Mammary epithelial cell (primary cell): ENCODE measurements at regions of chr1 and their contacts with region 1.

Region 1: DNA sequence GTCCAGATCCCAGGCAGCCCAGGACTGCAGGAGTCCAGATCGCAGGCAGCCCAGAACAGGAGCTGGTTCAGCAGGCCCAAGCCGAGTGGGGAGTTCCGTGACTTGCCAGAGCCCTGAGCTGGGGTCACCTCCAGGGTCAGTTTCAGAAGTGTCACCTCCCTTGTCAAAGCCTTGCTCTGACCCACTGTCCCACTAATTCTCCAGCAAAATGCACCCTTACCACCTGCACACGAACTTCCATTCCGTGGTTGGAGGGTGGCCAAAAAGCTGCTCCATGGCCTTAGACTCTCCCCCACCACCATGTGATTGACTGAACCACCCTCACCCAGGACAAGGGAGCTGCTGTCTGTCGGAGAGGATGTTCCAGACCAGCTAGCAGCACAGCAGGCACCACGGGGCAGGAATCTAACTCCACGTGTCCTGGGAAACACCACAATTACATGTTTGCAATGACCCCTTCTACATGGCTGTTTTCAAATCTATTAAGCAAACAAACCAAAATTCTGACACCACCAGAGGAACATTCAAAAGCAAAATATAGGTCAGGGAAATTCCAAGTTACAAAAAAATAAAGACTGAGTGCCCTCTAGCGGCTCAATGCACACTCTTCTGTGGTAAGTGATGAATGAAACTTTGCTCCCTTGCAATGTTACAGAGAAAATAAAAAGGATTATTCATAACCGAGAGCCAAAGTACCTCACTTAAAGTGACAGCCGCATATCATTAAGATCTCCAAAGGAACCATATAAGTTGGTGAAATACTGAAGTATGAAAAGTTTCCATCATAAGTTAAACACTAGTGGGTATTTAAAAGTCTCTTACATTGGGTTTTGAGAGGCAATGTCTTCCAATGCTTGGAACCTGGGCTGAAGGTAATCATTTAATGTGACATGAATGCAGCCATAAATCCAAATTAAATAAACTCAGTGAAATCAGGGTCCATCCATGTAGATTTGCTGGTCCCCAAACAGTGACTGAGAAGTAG is 76.3 kb downstream of the NPHP4 start:
- DNase-seq: peak; percentile 58
- H3K4me3 ChIP-seq: no peak overlapping the region
- H3K27ac ChIP-seq: no peak overlapping the region
- H3K4me1 ChIP-seq: peaks cover 8% of the 10 kb centered on the region
- H3K27me3 ChIP-seq: no peaks in the 10 kb centered on the region
- CTCF ChIP-seq: peak; percentile 73 to 77

Region 2: DNA sequence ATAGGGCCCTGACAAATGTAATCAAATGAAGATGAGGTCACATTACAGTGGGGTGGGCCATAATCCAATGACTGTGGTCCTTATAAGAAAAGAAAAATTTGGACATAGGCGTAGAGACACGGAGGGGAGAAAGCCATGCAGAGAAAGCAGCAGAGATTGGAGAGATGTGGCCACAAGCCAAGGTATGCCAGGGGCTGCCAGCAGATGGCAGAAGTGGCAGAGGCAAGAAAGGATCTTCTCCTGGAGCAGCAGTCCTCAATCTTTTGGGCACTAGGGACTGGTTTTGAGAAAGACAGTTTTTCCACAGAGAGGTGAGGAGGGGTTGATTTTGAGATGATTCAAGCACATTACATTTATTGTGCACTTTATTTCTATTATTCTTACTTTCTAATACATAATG is 278.7 kb before region 1 on chr1:
- CTCF ChIA-PET with region 1: no interaction called
- dilution Hi-C with region 1: no loop called
- in situ Hi-C with region 1: no loop called
- intact Hi-C with region 1: loop called (anchors 1 kb)
- DNase-seq: no peak
- H3K4me3 ChIP-seq: no peak overlapping the region
- H3K27ac ChIP-seq: no peak overlapping the region
- H3K4me1 ChIP-seq: no peaks in the 10 kb centered on the region
- H3K27me3 ChIP-seq: no peaks in the 10 kb centered on the region
- CTCF ChIP-seq: peak; percentile 56 to 78